ENCODE measurements at regions of chr19 and their contacts with region 1.

Region 1: GRCh38 chr19:12294249-12295158 is at the start of gene ZNF44:
- DNase-seq: peak; percentile 87
- ATAC-seq: peak; percentile 93
- H3K4me3 Mint-ChIP-seq: peak within 1 kb of the TSS; percentile 99
- H3K27ac Mint-ChIP-seq: peak within 1 kb of the TSS; percentile 95
- H3K4me1 Mint-ChIP-seq: peaks cover 35% of the 10 kb centered on the region
- H3K27me3 Mint-ChIP-seq: no peaks in the 10 kb centered on the region
- CTCF ChIP-seq: no peak
- total RNA-seq, gene ZNF44: 20.6 and 26.4 TPM in 2 replicates

Region 2: GRCh38 chr19:11964858-11965645 is 329.5 kb before region 1 on chr19 and contains the start of gene ZNF763:
- CTCF ChIA-PET with region 1: interaction called, 3 read pairs
- POLR2A ChIA-PET with region 1: interaction called, 5 read pairs
- intact Hi-C with region 1: loop called (anchors 1 kb)
- DNase-seq: peak; percentile 79
- ATAC-seq: peak; percentile 92
- H3K4me3 Mint-ChIP-seq: peak within 1 kb of the TSS; percentile 93
- H3K27ac Mint-ChIP-seq: peak within 1 kb of the TSS; percentile 97
- H3K4me1 Mint-ChIP-seq: peaks cover 26% of the 10 kb centered on the region
- H3K27me3 Mint-ChIP-seq: no peaks in the 10 kb centered on the region
- CTCF ChIP-seq: no peak
- total RNA-seq, gene ZNF763: 9.8 and 10.0 TPM in 2 replicates

Region 3: DNA sequence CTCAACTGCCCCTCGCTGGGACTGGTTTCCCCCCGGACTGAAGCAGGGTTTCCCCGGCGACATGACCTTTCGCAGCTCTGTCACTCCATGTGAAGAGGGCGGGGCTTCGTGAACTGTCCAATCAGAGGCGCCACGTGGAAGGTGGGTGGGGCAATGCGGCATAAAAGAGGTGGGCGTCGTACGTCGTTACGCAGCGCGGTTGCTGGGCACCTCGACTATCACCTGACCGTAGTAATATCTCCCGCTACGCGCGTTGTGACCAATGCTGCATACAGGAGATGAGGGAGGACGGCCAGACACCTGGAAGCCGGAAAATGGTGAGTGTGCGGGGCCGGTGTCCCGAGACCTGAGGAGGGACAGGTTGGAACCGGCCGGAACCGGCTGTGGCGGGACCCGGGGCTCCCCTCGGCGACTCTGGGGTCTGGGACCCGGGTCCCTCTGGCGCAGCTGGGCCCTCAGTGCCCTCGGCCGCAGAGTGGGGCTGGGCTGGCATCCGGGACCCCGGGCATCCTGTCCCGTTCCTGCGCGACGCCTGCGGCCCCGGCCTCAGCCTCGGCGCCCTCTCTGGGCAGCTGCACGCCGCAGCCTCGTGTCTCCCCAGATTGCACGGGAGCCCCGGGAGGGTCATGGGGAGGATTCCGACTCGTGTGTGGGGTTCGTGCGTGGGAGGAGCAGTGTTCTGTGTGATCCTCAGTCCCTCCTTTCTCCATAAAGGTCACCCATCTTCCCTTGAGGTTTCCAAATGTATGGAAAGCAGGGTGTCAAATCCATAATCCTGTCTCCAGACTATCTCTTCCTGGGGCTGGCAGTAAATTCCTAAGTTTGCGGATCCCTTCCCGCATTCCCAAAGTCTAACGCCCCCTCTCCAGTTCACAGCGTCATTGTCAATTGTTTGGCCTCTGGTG is 99.4 kb before region 1 on chr19:
- CTCF ChIA-PET with region 1: no interaction called
- POLR2A ChIA-PET with region 1: no interaction called
- intact Hi-C with region 1: no loop called
- DNase-seq: peak; percentile 69
- ATAC-seq: peak; percentile 97
- H3K4me3 Mint-ChIP-seq: peak overlapping the region; percentile 86
- H3K27ac Mint-ChIP-seq: peak overlapping the region; percentile 76
- H3K4me1 Mint-ChIP-seq: peaks cover 15% of the 10 kb centered on the region
- H3K27me3 Mint-ChIP-seq: no peaks in the 10 kb centered on the region
- CTCF ChIP-seq: no peak

Region 4: GRCh38 chr19:12346896-12347295 is 52.4 kb after region 1 on chr19:
- CTCF ChIA-PET with region 1: no interaction called
- POLR2A ChIA-PET with region 1: no interaction called
- intact Hi-C with region 1: loop called (anchors 5 kb)
- DNase-seq: no peak
- ATAC-seq: peak; percentile 61
- H3K4me3 Mint-ChIP-seq: no peak overlapping the region
- H3K27ac Mint-ChIP-seq: no peak overlapping the region
- H3K4me1 Mint-ChIP-seq: no peaks in the 10 kb centered on the region
- H3K27me3 Mint-ChIP-seq: no peaks in the 10 kb centered on the region
- CTCF ChIP-seq: no peak

Region 5: GRCh38 chr19:12365236-12366162 is 71.0 kb after region 1 on chr19 and contains the start of gene ZNF442:
- CTCF ChIA-PET with region 1: interaction called, 3 read pairs
- POLR2A ChIA-PET with region 1: interaction called, 25 read pairs
- intact Hi-C with region 1: loop called (anchors 1 kb)
- DNase-seq: peak; percentile 68
- ATAC-seq: peak; percentile 97
- H3K4me3 Mint-ChIP-seq: peak within 1 kb of the TSS; percentile 96
- H3K27ac Mint-ChIP-seq: peak within 1 kb of the TSS; percentile 91
- H3K4me1 Mint-ChIP-seq: peaks cover 25% of the 10 kb centered on the region
- H3K27me3 Mint-ChIP-seq: no peaks in the 10 kb centered on the region
- CTCF ChIP-seq: no peak
- total RNA-seq, gene ZNF442: 6.9 and 8.7 TPM in 2 replicates

Region 6: DNA sequence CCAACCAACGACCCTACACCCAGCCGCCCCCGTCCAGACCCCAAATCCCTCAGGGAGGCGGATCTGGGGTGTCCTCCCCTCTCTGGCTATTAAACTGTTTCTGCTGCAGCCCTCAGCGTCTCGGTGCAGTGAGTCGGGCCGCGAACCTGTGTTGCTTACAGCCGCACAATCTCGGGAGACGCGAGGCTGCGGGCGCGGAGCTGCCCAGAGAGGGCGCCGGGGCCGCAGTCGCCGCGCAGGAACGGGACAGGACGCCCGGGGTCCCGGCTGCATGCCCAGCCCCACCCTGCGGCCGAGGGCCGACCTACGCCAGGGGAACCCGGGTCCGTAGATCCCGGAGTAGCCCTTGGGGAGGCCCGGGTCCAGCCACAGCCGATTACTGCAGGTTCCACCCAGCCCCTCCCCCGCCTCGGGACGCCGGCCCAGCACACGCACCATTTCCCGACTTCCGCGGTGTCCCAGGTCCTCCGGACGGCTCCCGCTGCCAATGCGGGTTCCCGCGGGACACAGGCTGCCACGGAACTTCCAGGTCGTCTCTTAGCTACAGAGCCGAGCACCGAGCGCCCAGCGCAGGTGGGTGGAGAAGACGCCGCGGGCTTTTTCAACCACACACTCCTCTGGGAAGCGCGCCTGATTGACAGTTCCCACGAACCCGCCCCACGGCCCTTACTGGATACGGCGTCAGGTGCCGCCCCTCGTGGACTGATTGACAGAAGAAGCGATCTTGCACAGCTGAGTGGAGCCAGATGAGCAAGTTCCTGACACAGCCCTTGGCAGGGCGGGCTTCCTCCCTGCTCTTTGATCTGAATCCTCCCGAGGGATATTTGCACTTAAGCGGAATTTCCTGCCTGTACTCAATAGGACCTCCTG is 106.4 kb after region 1 on chr19 and contains the start of gene ZNF799:
- CTCF ChIA-PET with region 1: no interaction called
- POLR2A ChIA-PET with region 1: interaction called, 3 read pairs
- intact Hi-C with region 1: loop called (anchors 1 kb)
- DNase-seq: peak; percentile 83
- ATAC-seq: peak; percentile 89
- H3K4me3 Mint-ChIP-seq: peak within 1 kb of the TSS; percentile 92
- H3K27ac Mint-ChIP-seq: peak within 1 kb of the TSS; percentile 77
- H3K4me1 Mint-ChIP-seq: peaks cover 22% of the 10 kb centered on the region
- H3K27me3 Mint-ChIP-seq: no peaks in the 10 kb centered on the region
- CTCF ChIP-seq: no peak
- total RNA-seq, gene ZNF799: 6.8 and 6.9 TPM in 2 replicates

Region 7: DNA sequence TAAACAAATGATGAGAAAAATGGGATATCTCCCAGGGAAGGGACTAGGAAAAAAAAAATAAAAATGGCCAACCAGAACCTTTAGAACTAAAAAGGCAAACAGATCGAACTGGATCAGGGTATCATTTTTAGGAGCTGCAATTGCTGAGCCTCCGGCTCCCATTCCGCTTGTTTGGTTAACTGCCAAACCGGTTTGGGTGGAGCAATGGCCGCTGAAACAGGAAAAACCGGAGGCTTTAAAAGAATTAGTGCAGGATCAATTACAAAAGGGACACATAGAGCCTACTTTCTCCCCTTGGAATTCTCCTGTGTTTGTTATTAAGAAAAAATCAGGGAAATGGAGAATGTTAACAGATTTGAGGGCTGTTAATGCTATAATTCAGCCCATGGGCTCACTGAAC is 159.0 kb after region 1 on chr19:
- CTCF ChIA-PET with region 1: no interaction called
- POLR2A ChIA-PET with region 1: no interaction called
- intact Hi-C with region 1: no loop called
- DNase-seq: no peak
- ATAC-seq: no peak
- H3K4me3 Mint-ChIP-seq: no peak overlapping the region
- H3K27ac Mint-ChIP-seq: no peak overlapping the region
- H3K4me1 Mint-ChIP-seq: no peaks in the 10 kb centered on the region
- H3K27me3 Mint-ChIP-seq: no peaks in the 10 kb centered on the region
- CTCF ChIP-seq: no peak

Region 8: DNA sequence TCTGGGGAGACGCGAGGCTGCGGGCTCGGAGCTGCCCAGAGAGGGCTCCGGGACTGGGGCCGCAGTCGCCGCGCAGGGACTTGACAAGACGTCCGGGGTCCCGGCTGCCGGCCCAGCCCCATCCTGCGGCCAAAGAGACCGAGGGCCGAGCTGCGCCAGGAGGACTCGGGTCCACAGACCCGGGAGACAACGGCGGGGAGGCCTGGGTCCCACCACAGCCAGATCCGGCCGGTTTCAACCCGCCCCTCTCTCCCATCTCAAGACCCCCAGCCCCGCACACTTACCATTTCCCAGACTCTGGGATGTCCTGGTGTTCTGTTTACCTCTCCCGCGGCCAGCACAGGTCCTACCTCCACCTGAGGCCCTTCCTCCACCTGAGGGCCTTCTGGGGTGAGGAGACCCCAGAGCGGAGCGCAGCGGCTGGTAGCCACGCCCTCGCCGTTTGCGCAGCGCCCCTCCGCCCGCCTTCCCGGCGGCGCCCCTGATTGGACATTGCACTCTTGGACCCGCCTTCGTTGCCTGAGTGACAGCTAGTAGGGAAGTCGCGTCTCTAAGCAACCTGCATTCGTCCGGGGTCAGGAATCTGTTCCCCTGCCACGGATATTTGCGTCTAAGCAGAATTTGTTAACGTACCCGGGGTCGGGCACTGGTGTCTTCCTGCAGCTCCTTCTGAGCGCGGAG is 190.0 kb after region 1 on chr19 and contains the start of gene ZNF709:
- CTCF ChIA-PET with region 1: no interaction called
- POLR2A ChIA-PET with region 1: no interaction called
- intact Hi-C with region 1: loop called (anchors 10 kb)
- DNase-seq: peak; percentile 90
- ATAC-seq: peak; percentile 98
- H3K4me3 Mint-ChIP-seq: peak within 1 kb of the TSS; percentile 96
- H3K27ac Mint-ChIP-seq: peak within 1 kb of the TSS; percentile 88
- H3K4me1 Mint-ChIP-seq: peaks cover 35% of the 10 kb centered on the region
- H3K27me3 Mint-ChIP-seq: no peaks in the 10 kb centered on the region
- CTCF ChIP-seq: no peak
- total RNA-seq, gene ZNF709: 4.8 and 6.4 TPM in 2 replicates

Region 9: DNA sequence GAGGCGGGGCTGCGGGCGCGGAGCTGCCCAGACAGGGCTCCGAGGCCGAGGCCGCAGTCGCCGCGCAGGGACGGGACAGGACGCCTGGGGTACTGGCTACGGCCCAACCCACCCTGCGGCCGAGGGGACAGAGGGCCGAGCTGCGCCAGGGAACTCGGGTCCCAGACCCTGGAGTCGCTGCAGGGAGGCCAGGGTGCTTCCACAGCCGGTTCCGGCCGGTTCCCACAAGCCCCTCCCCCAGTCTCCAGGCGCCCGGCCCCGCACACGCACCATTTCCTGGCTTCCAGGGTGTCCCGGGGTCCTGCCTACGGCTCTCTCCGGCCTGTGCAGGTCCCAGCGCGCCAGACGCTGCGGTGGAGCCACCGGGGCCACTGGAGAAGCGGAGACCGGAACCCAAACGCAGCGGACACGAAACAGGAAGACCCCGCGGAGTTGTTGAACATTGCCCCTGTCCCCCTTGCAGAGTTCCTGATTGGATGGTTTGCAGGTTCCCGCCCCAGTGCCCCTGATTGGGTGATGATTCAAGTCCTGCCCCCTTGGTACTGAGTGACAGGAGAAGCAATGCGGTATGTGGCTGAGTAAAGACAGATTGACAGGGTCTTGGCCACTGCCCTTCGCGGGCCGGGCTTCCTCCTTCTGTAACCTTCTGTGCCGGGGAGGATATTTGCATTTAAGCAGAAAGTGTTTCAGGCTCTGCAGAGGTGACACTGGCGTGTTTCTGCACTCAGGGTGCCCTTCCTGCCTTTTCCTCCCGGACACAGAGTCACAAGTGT is 256.7 kb after region 1 on chr19 and contains the start of gene ZNF564:
- CTCF ChIA-PET with region 1: no interaction called
- POLR2A ChIA-PET with region 1: interaction called, 3 read pairs
- intact Hi-C with region 1: loop called (anchors 2 kb)
- DNase-seq: peak; percentile 81
- ATAC-seq: peak; percentile 98
- H3K4me3 Mint-ChIP-seq: peak within 1 kb of the TSS; percentile 98
- H3K27ac Mint-ChIP-seq: peak within 1 kb of the TSS; percentile 94
- H3K4me1 Mint-ChIP-seq: peaks cover 48% of the 10 kb centered on the region
- H3K27me3 Mint-ChIP-seq: no peaks in the 10 kb centered on the region
- CTCF ChIP-seq: no peak
- total RNA-seq, gene ZNF564: 23.0 and 26.6 TPM in 2 replicates

Region 10: GRCh38 chr19:13707915-13708314 is 1413.4 kb after region 1 on chr19:
- CTCF ChIA-PET with region 1: no interaction called
- POLR2A ChIA-PET with region 1: no interaction called
- intact Hi-C with region 1: no loop called
- DNase-seq: no peak
- ATAC-seq: no peak
- H3K4me3 Mint-ChIP-seq: no peak overlapping the region
- H3K27ac Mint-ChIP-seq: no peak overlapping the region
- H3K4me1 Mint-ChIP-seq: no peaks in the 10 kb centered on the region
- H3K27me3 Mint-ChIP-seq: peaks cover 17% of the 10 kb centered on the region
- CTCF ChIP-seq: no peak

Measured in activated B cell treated with CpG ODN at 0.5 μM for 24 hours (primary cell).